ENCODE measurements at regions of chr5 and their contacts with region 1.

Region 1: DNA sequence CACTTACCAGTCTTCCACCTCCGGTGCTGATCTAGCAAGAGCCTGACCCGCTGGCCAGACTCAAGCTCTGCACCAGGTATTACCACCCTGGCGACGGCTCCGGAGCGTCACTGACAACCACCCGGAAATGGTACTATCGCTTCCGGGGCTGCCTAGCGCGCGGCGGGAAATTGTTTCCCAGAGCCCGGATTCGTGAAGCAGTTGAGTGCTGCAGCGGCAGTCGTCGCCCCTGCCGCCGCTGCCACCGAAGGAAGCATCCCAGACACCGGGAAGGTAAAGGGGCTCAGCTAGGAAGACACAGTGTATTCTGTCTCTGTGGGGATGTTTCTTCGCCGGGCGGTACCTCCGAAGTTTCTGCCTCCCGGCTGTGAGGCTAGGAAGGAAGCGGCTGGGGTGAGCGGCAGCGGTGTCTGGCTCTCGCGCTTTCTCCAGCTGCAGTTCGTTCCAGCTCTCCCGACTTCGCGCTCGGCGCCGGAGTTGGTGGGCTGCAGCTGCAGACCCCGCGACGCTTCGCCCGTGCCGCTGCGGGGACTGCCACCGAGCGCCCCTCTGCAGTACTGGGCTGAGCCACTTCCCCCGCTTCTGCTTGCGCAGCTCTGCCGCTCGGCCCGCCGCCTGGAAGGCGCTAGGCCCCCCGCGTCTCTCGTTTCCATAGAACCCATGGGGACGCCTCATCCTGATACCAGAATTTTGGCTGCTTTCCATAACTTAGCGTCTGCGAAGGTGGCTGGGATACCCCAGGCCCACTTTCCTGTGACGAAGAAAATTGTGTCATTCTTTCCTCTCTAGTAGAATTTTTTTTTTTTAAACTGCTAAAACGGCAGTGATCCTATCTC is at the starts of genes KIAA0825 and SLF1:
- DNase-seq: peak; percentile 79
- ATAC-seq: peak; percentile 99
- H3K4me3 ChIP-seq: peak within 1 kb of the TSS; percentile 95 to 96
- H3K27ac ChIP-seq: peak within 1 kb of the TSS; percentile 84
- H3K4me1 ChIP-seq: peaks cover 7% of the 10 kb centered on the region
- H3K27me3 ChIP-seq: no peaks in the 10 kb centered on the region
- CTCF ChIP-seq: no peak
- total RNA-seq, gene KIAA0825: 1.6 TPM
- total RNA-seq, gene SLF1: 9.7 TPM

Region 2: GRCh38 chr5:94632024-94632423 is 13.3 kb after region 1 on chr5:
- CTCF ChIA-PET with region 1: no interaction called
- POLR2A ChIA-PET with region 1: no interaction called
- in situ Hi-C with region 1: no loop called
- intact Hi-C with region 1: loop called (anchors 1 kb)
- DNase-seq: no peak
- ATAC-seq: no peak
- H3K4me3 ChIP-seq: no peak overlapping the region
- H3K27ac ChIP-seq: no peak overlapping the region
- H3K4me1 ChIP-seq: no peaks in the 10 kb centered on the region
- H3K27me3 ChIP-seq: no peaks in the 10 kb centered on the region
- CTCF ChIP-seq: no peak

Region 3: DNA sequence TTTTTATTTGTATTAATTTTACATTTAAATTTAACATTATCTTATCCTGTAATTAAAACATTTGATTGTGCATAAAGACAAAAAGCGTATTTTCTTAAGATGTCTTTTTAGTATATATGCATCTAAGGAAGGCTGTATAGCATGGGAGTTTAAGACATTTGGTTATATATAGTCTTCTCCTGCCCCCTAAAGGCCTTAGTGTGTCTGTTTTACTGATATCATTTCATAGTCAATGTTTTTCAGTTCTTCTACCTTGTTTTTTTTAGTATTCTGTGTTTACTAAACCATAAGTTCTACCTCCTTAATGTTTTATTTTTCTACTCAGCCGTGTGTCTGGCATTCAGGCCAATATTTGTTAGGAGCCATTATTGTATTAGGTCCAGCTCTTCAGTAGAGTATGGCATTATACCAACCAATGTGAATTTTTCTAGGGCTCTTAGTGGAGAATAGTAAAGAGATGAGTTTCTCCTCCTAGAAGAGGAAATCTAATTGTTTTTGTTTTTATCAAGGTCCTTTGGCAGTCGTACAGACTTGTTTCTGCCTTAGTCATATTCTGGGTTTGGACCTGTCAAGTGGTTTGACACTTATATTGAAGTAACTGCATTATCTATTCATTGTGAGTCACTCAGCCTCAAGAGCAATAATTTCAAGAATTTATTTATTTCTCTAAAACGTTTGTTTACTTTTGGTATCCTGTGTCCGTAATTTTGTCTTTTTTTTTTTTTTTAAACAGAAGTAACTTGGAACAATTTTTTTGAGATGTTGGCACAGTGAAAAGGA is 74.5 kb after region 1 on chr5:
- CTCF ChIA-PET with region 1: no interaction called
- POLR2A ChIA-PET with region 1: no interaction called
- in situ Hi-C with region 1: no loop called
- intact Hi-C with region 1: loop called (anchors 5 kb)
- DNase-seq: peak; percentile 7
- ATAC-seq: peak; percentile 77
- H3K4me3 ChIP-seq: no peak overlapping the region
- H3K27ac ChIP-seq: no peak overlapping the region
- H3K4me1 ChIP-seq: no peaks in the 10 kb centered on the region
- H3K27me3 ChIP-seq: no peaks in the 10 kb centered on the region
- CTCF ChIP-seq: peak; percentile 44; the same call in 1 of the 2 replicates

Region 4: GRCh38 chr5:94740286-94740685 is 121.6 kb after region 1 on chr5:
- CTCF ChIA-PET with region 1: no interaction called
- POLR2A ChIA-PET with region 1: no interaction called
- in situ Hi-C with region 1: no loop called
- intact Hi-C with region 1: loop called (anchors 2 kb)
- DNase-seq: no peak
- ATAC-seq: no peak
- H3K4me3 ChIP-seq: no peak overlapping the region
- H3K27ac ChIP-seq: no peak overlapping the region
- H3K4me1 ChIP-seq: no peaks in the 10 kb centered on the region
- H3K27me3 ChIP-seq: no peaks in the 10 kb centered on the region
- CTCF ChIP-seq: no peak

Measured in Panc1 (cell line).